ENCODE measurements at regions of chr17 and their contacts with region 1.

Region 1: DNA sequence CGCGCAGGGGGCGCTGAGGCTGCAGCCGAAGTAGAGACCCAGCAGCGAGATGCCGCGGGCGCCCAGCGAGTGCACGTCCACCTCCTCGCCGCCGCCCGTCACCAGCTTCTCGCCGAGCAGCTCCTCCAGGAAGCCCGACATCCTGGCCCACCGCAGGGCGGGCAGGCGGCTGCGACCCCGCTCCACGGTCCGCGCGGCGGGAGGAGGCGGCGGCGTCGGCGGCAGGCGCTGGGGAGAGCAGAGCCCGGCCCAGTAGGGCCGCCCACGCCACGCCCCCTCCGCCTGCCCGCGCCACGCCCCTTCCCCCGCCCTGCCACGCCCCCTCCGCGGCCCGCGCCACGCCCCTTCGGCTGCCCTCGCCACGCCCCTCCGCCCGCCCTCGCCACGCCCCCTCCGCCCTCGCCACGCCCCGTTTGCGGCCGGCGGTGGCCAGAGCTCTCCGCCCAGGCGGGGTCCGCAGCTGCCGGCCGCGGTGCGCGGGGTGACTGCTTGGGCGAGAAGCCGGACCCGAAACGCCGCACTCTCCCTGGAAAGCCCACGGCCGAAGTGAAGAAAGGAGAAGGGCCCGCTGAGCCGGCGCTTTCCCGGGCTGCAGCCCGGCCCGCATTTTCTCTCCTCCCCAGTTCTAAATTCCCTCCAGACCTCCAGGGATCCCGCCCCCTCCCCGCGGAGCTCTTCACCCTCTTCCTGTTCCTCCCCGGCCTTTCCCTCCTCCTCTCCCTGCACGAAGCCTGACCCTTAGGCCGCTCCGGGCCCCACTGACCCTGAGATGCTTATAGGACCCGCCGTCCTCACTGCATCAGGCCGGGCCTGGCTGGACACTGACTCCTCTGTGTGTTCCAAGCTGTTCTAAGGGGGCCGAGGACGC is at the start of gene NXN:
- DNase-seq: no peak
- H3K4me3 ChIP-seq: peak within 1 kb of the TSS; percentile 86
- H3K27ac ChIP-seq: peak within 1 kb of the TSS; percentile 57
- H3K27me3 ChIP-seq: no peaks in the 10 kb centered on the region
- CTCF ChIP-seq: 0 out of 2 replicates have a peak, but pooled peaks have one; percentile 25
- polyA plus RNA-seq, gene NXN: 118 and 135 TPM in 2 replicates

Region 2: GRCh38 chr17:716238-716637 is 263.5 kb before region 1 on chr17:
- CTCF ChIA-PET with region 1: interaction called, 14 read pairs
- POLR2A ChIA-PET with region 1: interaction called, 4 read pairs
- DNase-seq: no peak
- H3K4me3 ChIP-seq: no peak overlapping the region
- H3K27ac ChIP-seq: no peak overlapping the region
- H3K27me3 ChIP-seq: no peaks in the 10 kb centered on the region
- CTCF ChIP-seq: no peak

Region 3: DNA sequence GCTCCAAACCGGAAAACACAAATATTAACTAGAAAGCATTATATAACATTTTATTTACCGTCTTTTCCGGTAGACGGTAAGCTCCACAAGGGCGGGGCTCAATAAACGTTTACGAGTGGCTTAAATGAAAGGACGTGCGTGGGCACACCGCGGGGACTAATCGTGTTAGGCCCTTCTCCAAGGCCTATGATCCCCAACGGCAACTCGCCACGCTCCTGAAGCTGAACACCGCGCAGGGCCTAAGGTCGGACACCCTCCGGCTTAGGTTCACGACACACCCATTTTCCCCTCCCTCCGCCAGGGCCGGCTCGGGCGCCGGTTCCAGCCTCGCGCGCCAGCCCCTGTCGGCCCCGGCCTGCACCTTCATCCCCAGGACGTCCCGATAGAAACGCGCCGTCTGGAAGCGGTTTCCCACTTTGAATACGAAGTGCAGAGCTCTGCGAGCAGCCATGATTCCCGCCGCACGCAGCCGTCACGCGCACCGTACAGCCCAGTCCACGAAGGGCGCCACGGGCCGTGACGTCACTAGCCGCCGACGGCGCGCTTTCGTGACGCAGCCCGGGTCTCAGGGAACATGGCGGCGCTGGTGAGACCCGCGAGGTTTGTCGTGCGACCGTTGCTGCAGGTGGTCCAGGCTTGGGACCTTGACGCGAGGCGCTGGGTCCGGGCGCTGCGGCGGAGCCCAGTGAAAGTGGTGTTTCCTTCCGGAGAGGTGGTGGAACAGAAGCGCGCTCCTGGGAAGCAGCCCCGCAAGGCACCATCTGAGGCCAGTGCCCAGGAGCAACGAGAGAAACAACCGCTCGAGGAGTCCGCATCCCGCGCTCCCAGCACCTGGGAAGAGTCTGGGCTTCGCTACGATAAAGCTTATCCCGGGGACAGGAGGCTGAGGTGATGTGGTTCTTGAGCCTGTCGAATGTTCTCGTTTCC is 197.7 kb before region 1 on chr17 and contains the starts of genes GLOD4 and MRM3:
- CTCF ChIA-PET with region 1: interaction called, 24 read pairs
- POLR2A ChIA-PET with region 1: interaction called, 4 read pairs
- DNase-seq: peak; percentile 57
- H3K4me3 ChIP-seq: peak within 1 kb of the TSS; percentile 94
- H3K27ac ChIP-seq: peak within 1 kb of the TSS; percentile 69
- H3K27me3 ChIP-seq: no peaks in the 10 kb centered on the region
- CTCF ChIP-seq: no peak; the same call in 1 of the 2 replicates
- polyA plus RNA-seq, gene GLOD4: 33.5 and 42.2 TPM in 2 replicates
- polyA plus RNA-seq, gene MRM3: 8.1 and 8.7 TPM in 2 replicates

Region 4: DNA sequence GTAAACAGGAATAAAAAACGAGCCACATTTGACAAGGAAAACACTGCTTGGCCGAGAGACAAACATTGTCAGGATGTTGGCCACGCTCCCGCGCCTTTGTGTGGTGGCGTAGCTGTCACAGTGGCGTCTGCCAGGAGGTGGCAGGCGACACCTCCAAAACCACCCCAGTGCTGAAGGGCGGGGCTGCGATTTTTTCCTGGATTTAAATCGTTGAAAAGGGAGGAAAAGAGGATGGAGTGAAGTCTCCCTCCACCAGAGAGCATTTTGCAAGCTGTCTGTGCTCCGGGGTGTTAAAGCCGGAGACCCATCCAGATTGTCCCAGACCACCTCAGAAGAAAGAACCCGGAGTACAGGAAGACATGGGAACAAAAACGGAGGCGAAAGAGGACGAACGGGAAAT is 184.9 kb before region 1 on chr17:
- CTCF ChIA-PET with region 1: interaction called, 14 read pairs
- POLR2A ChIA-PET with region 1: interaction called, 5 read pairs
- DNase-seq: peak; percentile 6
- H3K4me3 ChIP-seq: no peak overlapping the region
- H3K27ac ChIP-seq: peak overlapping the region; percentile 39
- H3K27me3 ChIP-seq: no peaks in the 10 kb centered on the region
- CTCF ChIP-seq: peak; percentile 56

Region 5: DNA sequence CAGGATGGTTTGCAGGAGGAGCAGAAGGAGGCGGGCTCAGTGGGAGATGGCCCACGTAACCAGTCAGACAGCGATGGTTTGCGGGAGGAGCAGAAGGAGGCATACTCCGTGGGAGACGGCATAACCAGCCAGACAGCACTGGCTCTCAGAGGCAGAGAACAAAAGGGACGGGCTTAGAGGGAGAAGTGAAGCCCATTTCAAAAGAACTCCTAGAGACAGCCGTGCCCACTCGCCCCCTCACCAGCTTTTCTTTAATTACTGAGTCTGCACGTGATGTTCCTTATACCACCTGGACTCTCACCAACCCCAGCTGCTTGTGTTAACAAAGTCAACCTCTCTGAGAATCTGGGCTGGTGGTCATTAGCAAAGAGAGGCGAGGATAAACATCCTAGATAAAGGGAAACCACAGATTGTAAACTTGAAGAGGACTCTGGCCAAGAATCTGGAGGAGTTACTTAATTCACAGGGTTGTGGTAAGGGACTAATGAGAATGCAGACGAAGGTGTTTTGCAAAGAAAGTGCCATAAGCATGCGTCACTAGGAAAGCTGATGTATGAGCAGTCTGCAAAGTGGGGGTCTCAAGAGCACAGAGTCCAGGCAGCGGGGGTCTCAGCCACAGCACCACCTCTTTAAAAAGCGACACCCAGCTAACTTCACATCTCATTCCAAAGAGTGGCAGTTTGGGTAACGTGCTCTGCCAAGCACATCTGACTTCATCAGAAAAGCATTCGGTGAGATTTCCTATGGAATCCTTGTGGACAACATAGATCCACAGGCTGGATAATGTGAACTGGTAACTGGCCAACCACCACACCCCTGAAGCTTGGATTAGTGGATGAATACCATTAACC is 51.9 kb before region 1 on chr17:
- CTCF ChIA-PET with region 1: interaction called, 7 read pairs
- POLR2A ChIA-PET with region 1: interaction called, 13 read pairs
- DNase-seq: peak; percentile 94
- H3K4me3 ChIP-seq: peak overlapping the region; percentile 10; the same call in 1 of the 2 replicates
- H3K27ac ChIP-seq: peak overlapping the region; percentile 94
- H3K27me3 ChIP-seq: no peaks in the 10 kb centered on the region
- CTCF ChIP-seq: no peak

Region 6: DNA sequence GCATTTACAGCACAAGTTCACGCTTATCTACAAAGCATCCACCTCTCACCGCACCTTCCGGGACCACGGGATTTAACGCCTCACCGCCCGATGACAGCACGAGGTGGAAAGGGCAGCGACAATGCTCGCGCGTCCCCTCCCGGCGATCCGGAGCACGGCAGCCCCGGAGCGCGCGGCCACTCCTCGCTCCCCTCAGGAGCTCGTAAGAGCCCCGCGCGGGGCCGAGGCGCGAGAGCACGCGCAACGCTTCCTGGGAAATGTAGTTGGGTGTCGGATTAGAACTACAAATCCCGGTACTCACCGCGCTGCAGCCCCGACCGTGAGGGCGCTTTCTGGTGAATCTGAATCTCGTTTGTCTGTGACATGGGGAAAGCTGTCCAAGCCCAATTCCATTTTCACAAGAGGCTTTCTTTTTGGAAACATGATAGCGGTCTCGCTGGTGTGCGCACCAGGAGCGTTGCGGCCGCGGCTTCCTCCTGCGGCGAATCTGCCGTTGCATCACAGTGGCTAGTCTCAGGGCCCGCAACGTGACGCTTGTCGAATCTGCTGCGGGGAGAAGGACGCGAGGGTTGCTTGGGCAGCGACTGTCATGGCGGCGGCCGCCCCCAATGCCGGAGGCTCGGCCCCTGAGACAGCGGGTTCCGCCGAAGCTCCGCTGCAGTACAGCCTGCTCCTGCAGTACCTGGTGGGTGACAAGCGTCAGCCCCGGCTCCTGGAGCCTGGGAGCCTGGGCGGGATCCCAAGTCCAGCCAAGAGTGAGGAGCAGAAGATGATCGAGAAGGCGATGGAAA is 17.0 kb after region 1 on chr17 and contains the start of gene TIMM22:
- CTCF ChIA-PET with region 1: interaction called, 33 read pairs
- POLR2A ChIA-PET with region 1: interaction called, 3 read pairs
- DNase-seq: peak; percentile 94
- H3K4me3 ChIP-seq: peak within 1 kb of the TSS; percentile 100
- H3K27ac ChIP-seq: peak within 1 kb of the TSS; percentile 91
- H3K27me3 ChIP-seq: no peaks in the 10 kb centered on the region
- CTCF ChIP-seq: peak; percentile 85
- polyA plus RNA-seq, gene TIMM22: 17.7 and 18.1 TPM in 2 replicates

Region 7: DNA sequence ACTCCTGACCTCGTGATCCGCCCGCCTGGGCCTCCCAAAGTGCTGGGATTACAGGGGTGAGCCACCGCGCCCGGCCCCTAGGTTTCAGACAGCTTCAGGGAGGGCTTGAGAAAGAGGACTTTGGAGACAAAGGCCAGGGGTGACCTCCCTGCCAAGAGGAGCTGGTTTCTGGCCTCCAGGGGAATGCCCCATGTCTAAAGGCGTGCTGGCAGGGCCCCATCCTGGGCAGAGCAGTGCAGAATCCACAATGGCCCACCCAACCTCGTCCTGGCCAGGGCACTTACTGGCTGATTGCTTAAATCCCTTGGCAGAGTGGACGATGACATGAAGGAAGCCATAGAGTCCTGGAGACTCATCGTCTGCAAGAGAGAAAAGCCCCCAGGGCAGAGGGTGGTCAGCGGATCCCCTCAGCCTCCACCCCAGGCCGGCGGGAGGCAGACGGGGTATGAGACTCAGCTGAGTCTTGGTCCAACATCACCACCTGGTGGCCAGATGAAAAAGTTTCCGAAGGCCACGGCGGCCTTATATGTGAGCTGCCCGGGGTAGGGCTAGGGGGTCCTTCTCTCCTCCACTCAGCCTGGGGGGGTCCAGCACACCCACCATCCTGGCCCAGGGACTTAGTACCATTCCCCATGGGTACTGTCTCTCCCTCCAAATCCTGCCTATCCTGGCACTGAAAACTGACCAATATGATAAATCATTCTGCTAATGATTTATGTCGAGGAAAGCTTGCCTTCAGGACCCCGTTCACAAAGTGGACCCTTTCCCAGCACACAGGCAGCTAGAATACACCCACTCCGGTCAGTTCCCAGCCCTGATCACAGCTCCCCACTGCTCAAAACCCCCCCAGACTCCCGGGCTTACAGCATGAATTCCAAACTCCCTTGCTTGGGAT is 76.2 kb after region 1 on chr17:
- CTCF ChIA-PET with region 1: interaction called, 22 read pairs
- POLR2A ChIA-PET with region 1: no interaction called
- DNase-seq: peak; percentile 33
- H3K4me3 ChIP-seq: no peak overlapping the region
- H3K27ac ChIP-seq: no peak overlapping the region
- H3K27me3 ChIP-seq: no peaks in the 10 kb centered on the region
- CTCF ChIP-seq: peak; percentile 73